ENCODE measurements at regions of chr20 and their contacts with region 1.

Region 1: GRCh38 chr20:58236612-58237330 is 8.3 kb upstream of the ANKRD60 start:
- DNase-seq: peak; percentile 94
- H3K4me3 ChIP-seq: peak overlapping the region; percentile 50 to 58 (median 52)
- H3K27ac ChIP-seq: no peak overlapping the region
- H3K4me1 ChIP-seq: peaks cover 0 to 13% (median 9%) of the 10 kb centered on the region in 4 donors
- H3K27me3 ChIP-seq: no peaks in the 10 kb centered on the region
- CTCF ChIP-seq: peak in 2 of 3 experiments; percentile 90 to 98
- EP300 ChIP-seq: no peak
- POLR2A ChIP-seq: no peak

Region 2: DNA sequence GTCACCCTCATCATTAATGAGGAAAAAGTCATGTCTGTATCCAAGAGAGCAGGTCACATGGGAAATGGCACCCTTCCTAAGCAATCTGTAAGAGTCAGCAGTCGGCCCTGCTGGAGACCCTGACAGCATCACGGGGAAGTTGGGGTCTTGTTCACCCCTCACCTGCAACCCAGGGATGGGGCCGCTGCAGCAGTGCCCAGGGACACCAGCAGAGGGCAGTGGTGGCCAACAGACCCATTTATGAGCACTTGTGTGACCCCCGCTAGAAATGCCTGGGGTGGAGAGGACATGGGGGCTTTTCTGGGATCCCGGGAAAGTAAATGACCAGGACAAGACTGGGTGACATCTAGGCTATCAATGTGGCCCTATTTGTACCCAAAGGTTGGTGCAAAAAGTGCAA is 44.2 kb before region 1 on chr20:
- intact Hi-C with region 1: no loop called
- DNase-seq: no peak
- H3K4me3 ChIP-seq: no peak overlapping the region
- H3K27ac ChIP-seq: no peak overlapping the region
- H3K4me1 ChIP-seq: no peaks in the 10 kb centered on the region
- H3K27me3 ChIP-seq: peaks cover 0 to 15% (median 0%) of the 10 kb centered on the region in 4 donors
- CTCF ChIP-seq: peak; percentile 19 to 56 (median 23)
- EP300 ChIP-seq: no peak
- POLR2A ChIP-seq: no peak

Region 3: DNA sequence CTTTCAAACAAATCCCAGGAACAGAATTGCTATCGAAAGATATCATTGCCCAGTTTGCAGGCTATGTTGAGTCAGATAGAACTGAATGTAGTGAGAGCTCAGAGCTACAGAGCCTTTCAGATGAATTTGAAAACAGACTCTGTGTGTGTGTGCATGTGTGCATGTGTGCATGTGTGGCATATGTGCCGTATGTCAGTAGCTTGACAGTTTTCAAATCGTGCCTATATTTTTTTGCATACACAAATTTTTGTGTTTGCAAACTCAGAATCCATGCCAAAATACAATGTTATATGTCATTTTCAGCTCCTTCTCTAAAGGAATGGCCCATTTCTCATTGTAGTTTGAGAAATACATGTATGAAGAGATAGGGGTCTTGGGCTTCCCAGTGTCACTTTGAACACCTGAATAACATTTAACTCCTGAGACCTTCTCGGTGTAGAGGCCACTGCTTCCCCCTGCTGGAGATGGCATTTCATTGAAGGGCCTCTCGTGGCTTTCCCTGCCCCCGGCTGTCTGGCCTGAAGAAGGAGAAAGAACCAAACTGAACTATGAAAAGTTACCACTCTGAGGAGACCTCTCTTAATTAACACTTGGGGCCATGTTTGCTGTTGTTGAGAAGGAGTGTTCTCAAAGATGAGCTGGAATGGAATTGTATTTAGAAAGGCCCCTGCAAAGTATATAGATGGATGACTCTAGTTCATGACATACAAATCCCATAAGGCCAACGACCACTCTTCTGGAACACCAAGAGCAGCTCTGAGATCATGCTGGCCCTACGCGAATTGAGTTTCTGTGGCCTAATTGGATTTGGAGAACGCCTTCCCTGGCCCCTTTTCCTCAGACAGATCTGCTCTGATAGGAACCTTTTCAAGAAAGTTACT is 211.0 kb after region 1 on chr20:
- intact Hi-C with region 1: loop called (anchors 2 kb)
- DNase-seq: no peak
- H3K4me3 ChIP-seq: no peak overlapping the region
- H3K27ac ChIP-seq: no peak overlapping the region
- H3K4me1 ChIP-seq: peaks cover 0 to 25% (median 16%) of the 10 kb centered on the region in 4 donors
- H3K27me3 ChIP-seq: no peaks in the 10 kb centered on the region
- CTCF ChIP-seq: peak; percentile 58 to 69 (median 60)
- EP300 ChIP-seq: no peak
- POLR2A ChIP-seq: no peak

Region 4: GRCh38 chr20:58692594-58693226 is 455.9 kb after region 1 on chr20 and contains the start of gene NPEPL1:
- intact Hi-C with region 1: loop called (anchors 5 kb)
- DNase-seq: no peak
- H3K4me3 ChIP-seq: peak within 1 kb of the TSS; percentile 54 to 78 (median 62)
- H3K27ac ChIP-seq: peak within 1 kb of the TSS; percentile 86 to 97 (median 96)
- H3K4me1 ChIP-seq: peaks cover 30 to 55% (median 55%) of the 10 kb centered on the region in 4 donors
- H3K27me3 ChIP-seq: no peaks in the 10 kb centered on the region
- CTCF ChIP-seq: peak in 2 of 3 experiments; percentile 40 to 49
- EP300 ChIP-seq: no peak
- POLR2A ChIP-seq: no peak
- total RNA-seq, gene NPEPL1: 29.0 to 59.0 (median 50.5) TPM

Region 5: DNA sequence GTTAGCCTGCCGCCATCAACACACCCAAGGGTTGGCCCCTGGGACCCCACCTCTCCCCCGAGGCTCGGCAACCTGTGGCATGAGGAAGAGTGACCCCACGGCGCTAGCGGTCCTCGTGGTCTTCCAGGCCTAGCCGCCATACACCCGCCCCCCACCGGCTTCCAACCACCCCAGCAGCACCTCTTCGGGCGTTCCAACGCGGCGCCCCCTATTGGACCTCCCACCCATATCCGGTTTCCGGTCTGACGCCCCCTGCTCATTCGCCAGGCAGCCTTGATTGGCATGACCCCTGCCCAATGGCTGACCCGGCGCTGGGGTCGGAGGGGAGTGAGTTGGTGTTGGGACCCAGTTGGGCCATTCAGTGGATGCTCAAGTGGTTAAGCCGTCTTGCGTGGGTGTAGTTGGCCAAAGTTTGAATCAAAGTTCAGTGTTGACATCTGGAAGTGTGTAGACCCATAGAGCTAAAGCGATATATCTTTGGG is 614.0 kb after region 1 on chr20 and contains the start of gene GNAS-AS1:
- intact Hi-C with region 1: loop called (anchors 10 kb)
- DNase-seq: no peak
- H3K4me3 ChIP-seq: peak within 1 kb of the TSS; percentile 47 to 60 (median 53)
- H3K27ac ChIP-seq: no peak within 1 kb of the TSS
- H3K4me1 ChIP-seq: peaks cover 5 to 51% (median 35%) of the 10 kb centered on the region in 4 donors
- H3K27me3 ChIP-seq: peaks cover 0 to 85% (median 19%) of the 10 kb centered on the region in 4 donors
- CTCF ChIP-seq: no peak
- EP300 ChIP-seq: no peak
- POLR2A ChIP-seq: no peak
- total RNA-seq, gene GNAS-AS1: 0.13 to 0.42 (median 0.23) TPM in 3 of 4 donors, not detected in the other